Activated T-helper 1 cell treated with anti-CD3 and anti-CD28 coated beads, Interleukin-12 subunit alpha, Interleukin-12 subunit beta, Interleukin-2, Interleukin-4 antibody, amounts not matched to agents 30 ng/mL and 10 ng/mL and 1 ng/mL, durations not matched to agents 14 hours and 24 hours and 36 hours (primary cell): ENCODE measurements at regions of chr7 and their contacts with region 1.

Region 1: GRCh38 chr7:43834463-43835251 is 34.7 kb downstream of the MRPS24 start:
- DNase-seq: peak; percentile 24
- H3K4me3 Mint-ChIP-seq: peak overlapping the region; percentile 73
- H3K27ac Mint-ChIP-seq: peak overlapping the region; percentile 78
- H3K4me1 Mint-ChIP-seq: peaks cover 16% of the 10 kb centered on the region
- H3K27me3 Mint-ChIP-seq: peaks cover 2% of the 10 kb centered on the region

Region 2: GRCh38 chr7:43071604-43072003 is 763.1 kb before region 1 on chr7:
- intact Hi-C with region 1: loop called (anchors 10 kb)
- DNase-seq: no peak
- H3K4me3 Mint-ChIP-seq: no peak overlapping the region
- H3K27ac Mint-ChIP-seq: no peak overlapping the region
- H3K4me1 Mint-ChIP-seq: peaks cover 25% of the 10 kb centered on the region
- H3K27me3 Mint-ChIP-seq: peaks cover 9% of the 10 kb centered on the region

Region 3: DNA sequence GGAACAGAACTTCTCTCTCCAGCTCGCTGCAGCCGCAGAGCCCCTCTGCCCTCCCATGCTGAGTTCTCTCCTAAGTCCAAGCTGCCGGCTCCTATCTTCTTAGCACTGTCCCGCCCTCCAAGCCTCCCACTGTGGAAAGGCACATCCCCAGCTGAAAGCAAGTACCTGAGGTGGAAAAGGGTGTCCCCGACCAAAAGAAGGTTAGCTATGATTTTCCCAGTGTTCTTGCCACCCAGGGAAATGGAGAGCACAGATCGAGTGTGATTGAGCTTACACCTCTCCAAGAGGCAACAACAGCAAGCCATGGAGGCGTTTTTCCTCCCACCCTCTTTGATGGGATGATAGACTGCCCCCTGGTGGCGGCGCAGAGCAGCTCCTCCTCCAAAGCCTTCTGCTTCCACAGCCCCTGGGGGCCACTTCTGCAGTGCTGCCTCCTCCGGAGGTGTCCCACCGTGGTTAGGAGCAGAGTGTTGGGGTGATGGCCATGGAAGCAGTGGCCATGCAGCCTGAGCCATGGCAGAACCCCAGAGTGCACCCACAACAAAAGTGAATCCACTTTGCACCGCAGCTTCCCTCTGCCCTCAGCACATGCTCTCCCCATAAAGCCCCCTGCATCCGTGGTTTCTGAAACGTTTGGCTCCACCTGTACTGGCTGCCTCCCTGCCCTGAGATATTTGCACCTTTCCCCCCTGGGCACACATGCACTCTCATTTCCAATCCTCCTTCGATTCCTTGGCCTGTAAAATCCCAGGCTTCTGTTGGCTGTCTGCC is 394.8 kb before region 1 on chr7:
- intact Hi-C with region 1: loop called (anchors 1 kb)
- DNase-seq: peak; percentile 28
- H3K4me3 Mint-ChIP-seq: no peak overlapping the region
- H3K27ac Mint-ChIP-seq: no peak overlapping the region
- H3K4me1 Mint-ChIP-seq: no peaks in the 10 kb centered on the region
- H3K27me3 Mint-ChIP-seq: peaks cover 3% of the 10 kb centered on the region

Region 4: GRCh38 chr7:43647673-43648472 is 186.8 kb before region 1 on chr7:
- intact Hi-C with region 1: loop called (anchors 2 kb)
- DNase-seq: no peak
- H3K4me3 Mint-ChIP-seq: peak overlapping the region; percentile 75
- H3K27ac Mint-ChIP-seq: peak overlapping the region; percentile 98
- H3K4me1 Mint-ChIP-seq: peaks cover 95% of the 10 kb centered on the region
- H3K27me3 Mint-ChIP-seq: no peaks in the 10 kb centered on the region

Region 5: GRCh38 chr7:43729214-43729923 is 105.3 kb before region 1 on chr7 and contains the start of gene COA1:
- intact Hi-C with region 1: loop called (anchors 1 kb)
- DNase-seq: peak; percentile 76
- H3K4me3 Mint-ChIP-seq: peak within 1 kb of the TSS; percentile 88
- H3K27ac Mint-ChIP-seq: peak within 1 kb of the TSS; percentile 76
- H3K4me1 Mint-ChIP-seq: peaks cover 28% of the 10 kb centered on the region
- H3K27me3 Mint-ChIP-seq: peaks cover 3% of the 10 kb centered on the region
- total RNA-seq, gene COA1: 81.7 and 88.6 TPM in 2 replicates